Activated naive CD4-positive, alpha-beta T cell treated with anti-CD3 and anti-CD28 coated beads for 36 hours (primary cell): ENCODE measurements at regions of chr12 and their contacts with region 1.

Region 1: GRCh38 chr12:51326762-51327439 is 2.9 kb upstream of the BIN2 start:
- DNase-seq: peak; percentile 37
- H3K4me3 Mint-ChIP-seq: peak overlapping the region; percentile 65
- H3K27ac Mint-ChIP-seq: peak overlapping the region; percentile 91
- H3K4me1 Mint-ChIP-seq: peaks cover 72% of the 10 kb centered on the region
- H3K27me3 Mint-ChIP-seq: no peaks in the 10 kb centered on the region

Region 2: DNA sequence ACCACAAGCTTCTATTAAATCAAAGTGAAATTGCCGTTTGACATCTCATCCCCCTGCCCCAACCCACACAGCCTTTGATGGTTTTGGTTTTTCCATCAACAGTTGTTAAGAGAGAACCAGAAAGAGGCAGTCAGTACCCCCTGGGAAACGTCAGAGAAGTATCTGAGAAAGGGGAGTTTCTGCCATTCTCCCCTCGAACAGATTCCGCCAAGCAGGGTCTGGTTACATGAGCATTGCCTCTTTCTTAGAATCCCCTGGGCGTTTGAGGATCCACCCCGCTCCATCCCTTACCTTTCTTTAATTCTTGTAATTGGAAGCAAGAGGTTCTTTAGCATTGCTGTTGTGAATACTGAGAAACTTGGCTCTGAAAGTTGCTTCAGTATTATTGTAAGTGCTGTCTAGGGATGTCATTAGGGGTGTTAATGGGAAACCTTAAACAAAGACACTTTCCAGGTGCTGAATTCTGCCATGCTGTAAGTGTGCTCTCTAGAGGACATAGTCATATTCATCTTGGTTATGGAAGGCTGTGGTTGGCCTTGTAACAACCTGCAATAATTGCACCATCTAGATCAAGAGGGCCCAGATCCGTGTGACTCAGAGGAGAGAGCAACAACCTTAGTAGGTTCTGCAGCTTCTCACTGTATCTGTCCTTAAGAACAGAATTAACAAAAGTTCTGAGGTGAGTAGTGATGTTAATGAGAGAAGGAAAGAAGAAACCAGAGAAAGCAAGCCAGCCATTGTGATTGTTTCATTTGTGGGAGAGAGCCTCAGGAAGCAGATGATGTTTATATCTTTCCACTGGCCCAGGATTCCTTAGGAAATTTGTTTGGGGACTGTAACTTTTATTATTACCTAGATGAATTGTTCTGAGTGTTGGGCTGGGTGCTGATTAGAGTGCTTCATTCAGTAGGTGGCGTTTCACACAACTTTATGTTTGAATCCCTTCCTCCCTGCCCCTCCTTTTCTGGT is 1576.6 kb before region 1 on chr12:
- CTCF ChIA-PET with region 1: no interaction called
- intact Hi-C with region 1: loop called (anchors 5 kb)
- DNase-seq: peak; percentile 87
- H3K4me3 Mint-ChIP-seq: peak overlapping the region; percentile 40
- H3K27ac Mint-ChIP-seq: peak overlapping the region; percentile 94
- H3K4me1 Mint-ChIP-seq: peaks cover 83% of the 10 kb centered on the region
- H3K27me3 Mint-ChIP-seq: no peaks in the 10 kb centered on the region

Region 3: DNA sequence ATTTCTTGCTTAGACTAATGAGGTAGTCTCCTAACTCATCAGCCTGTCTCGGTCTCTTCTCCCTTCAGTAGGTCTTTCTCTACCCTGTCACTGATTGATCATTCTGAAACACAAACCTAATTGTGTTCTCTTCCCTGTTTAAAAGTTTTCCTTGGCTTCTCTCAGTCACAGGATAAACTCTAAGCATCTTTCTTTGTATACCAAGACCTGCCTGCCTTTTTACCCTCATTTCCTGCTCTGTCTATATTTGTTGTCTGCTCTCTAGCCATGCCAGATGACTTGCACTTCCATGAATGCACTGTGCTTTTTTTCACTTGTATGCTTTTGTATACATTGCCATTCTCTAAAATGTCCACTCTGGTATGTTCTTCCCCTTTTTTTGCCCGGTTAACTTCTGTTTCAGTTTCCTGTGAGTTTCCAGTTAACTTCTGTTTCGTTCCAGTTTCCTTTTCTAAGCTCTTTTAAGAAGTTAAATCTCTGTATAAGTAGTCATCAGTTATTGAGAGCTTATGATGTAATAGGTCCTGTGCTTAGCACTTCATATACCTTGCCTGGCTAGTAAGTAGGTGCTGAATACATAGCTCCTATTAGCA is 809.3 kb before region 1 on chr12:
- CTCF ChIA-PET with region 1: no interaction called
- intact Hi-C with region 1: loop called (anchors 10 kb)
- DNase-seq: peak; percentile 23
- H3K4me3 Mint-ChIP-seq: no peak overlapping the region
- H3K27ac Mint-ChIP-seq: no peak overlapping the region
- H3K4me1 Mint-ChIP-seq: peaks cover 69% of the 10 kb centered on the region
- H3K27me3 Mint-ChIP-seq: no peaks in the 10 kb centered on the region

Region 4: DNA sequence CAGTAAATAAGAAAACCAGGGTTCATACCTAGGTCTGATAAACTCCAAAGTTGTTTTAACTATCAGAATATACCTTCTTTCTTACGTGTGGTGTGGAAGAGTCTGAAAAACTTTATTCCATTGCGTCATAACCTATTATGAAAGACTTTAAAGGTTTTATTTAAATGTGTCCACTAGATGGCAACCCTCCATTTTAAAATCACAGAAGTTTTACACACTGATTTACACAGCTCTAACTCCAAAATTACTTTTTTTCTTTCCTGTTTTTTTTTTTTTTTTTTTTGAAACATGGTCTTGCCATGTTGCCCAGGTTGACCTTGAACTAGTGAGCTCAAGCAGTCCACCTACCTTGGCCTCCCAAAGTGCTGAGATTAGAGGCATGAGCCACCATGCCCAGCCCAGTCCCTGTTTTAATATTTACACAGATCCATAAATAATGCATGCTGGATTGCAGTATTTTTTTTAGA is 501.5 kb before region 1 on chr12:
- CTCF ChIA-PET with region 1: no interaction called
- intact Hi-C with region 1: no loop called
- DNase-seq: no peak
- H3K4me3 Mint-ChIP-seq: no peak overlapping the region
- H3K27ac Mint-ChIP-seq: peak overlapping the region; percentile 52
- H3K4me1 Mint-ChIP-seq: peaks cover 10% of the 10 kb centered on the region
- H3K27me3 Mint-ChIP-seq: no peaks in the 10 kb centered on the region

Region 5: GRCh38 chr12:51047655-51048540 is 279.0 kb before region 1 on chr12 and contains the start of gene LETMD1:
- CTCF ChIA-PET with region 1: no interaction called
- intact Hi-C with region 1: loop called (anchors 5 kb)
- DNase-seq: peak; percentile 95
- H3K4me3 Mint-ChIP-seq: peak within 1 kb of the TSS; percentile 93
- H3K27ac Mint-ChIP-seq: peak within 1 kb of the TSS; percentile 93
- H3K4me1 Mint-ChIP-seq: peaks cover 34% of the 10 kb centered on the region
- H3K27me3 Mint-ChIP-seq: no peaks in the 10 kb centered on the region
- total RNA-seq, gene LETMD1: 88.7 to 89.0 TPM

Region 6: DNA sequence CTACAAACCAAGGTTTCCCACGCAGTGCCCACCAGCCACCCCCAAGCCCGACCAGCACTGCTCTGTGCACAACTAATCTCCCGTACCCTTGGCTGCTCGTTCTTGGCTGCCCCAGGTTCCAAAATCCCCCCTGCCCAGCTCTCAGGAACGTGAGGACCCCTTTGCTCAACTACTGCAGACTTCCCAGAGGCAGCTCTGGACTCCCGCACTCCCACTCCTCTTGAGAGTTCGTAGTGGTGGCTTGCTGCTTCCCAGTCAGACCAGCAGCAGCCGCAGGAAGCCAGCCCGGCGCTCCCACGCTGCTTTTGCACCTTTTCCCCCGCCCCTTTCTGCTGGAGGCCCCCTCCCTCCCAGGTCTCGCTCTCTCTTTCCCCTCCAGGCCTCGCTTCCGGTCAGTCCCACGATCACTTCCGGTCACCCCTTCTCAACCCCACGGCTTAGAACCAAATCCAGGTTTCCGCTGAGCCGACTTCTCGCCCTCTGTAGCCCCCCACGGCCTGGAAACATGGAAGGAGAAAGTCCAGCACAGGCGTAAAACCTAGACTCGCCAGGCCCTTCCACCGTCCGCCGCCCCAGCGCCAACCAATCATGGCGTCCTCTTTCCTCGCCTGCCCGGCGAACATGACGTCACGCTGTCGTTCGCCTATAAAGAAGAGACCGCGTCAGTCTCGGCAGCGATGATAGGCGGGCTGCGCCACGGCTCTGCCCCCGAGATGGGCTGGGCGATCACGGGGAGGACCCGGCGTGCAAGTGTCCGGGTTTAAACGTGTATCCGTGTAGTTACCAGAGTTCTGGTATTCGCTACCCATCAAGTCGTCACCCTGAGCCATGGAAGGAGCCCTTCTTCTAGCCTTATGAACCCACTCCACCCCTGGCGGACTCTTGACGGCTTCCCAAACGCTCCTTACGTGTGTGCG is 154.1 kb before region 1 on chr12 and contains the start of gene TFCP2:
- CTCF ChIA-PET with region 1: no interaction called
- intact Hi-C with region 1: loop called (anchors 5 kb)
- DNase-seq: peak; percentile 96
- H3K4me3 Mint-ChIP-seq: peak within 1 kb of the TSS; percentile 66
- H3K27ac Mint-ChIP-seq: peak within 1 kb of the TSS; percentile 66
- H3K4me1 Mint-ChIP-seq: peaks cover 14% of the 10 kb centered on the region
- H3K27me3 Mint-ChIP-seq: no peaks in the 10 kb centered on the region
- total RNA-seq, gene TFCP2: 23.6 to 25.4 TPM

Region 7: DNA sequence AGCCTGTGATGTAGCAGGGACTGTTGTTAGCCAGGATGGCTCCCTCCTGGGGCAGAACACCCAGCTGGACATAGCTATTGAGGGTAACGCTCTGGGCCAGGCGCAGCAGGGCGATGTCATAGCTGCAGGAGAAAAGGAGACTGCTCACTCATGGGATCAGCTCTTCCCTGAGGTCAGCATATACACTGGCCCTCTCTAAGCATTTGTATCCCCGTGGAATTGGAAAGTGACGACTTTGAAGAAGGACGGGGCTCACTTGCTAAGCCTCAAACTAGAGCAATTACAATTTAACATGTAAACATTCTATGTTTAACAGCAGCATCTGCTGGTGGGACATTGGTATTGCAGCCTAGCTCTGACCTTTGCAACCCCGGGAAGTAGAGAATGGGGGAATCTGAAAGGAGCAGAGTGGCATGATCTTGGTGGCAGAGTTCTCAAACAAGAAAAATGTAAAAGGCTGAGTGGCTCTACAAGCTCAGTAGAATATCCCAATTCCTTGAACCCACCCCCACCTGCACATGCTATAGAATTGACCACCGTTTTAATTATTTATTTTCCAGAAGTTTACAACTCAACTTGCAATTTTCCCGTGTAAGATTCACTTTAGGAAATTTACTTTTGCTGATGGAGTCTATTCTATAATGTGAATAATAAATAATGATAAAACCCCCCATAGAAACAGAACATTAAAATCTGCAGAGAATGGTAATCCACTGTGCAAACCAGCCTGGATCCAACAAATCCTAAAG is 14.5 kb after region 1 on chr12:
- CTCF ChIA-PET with region 1: interaction called, 49 read pairs
- intact Hi-C with region 1: no loop called
- DNase-seq: peak; percentile 88
- H3K4me3 Mint-ChIP-seq: no peak overlapping the region
- H3K27ac Mint-ChIP-seq: no peak overlapping the region
- H3K4me1 Mint-ChIP-seq: peaks cover 18% of the 10 kb centered on the region
- H3K27me3 Mint-ChIP-seq: no peaks in the 10 kb centered on the region

Region 8: GRCh38 chr12:51391283-51392162 is 64.6 kb after region 1 on chr12 and contains the start of gene GALNT6:
- CTCF ChIA-PET with region 1: no interaction called
- intact Hi-C with region 1: loop called (anchors 2 kb)
- DNase-seq: peak; percentile 68
- H3K4me3 Mint-ChIP-seq: peak within 1 kb of the TSS; percentile 83
- H3K27ac Mint-ChIP-seq: peak within 1 kb of the TSS; percentile 38
- H3K4me1 Mint-ChIP-seq: peaks cover 71% of the 10 kb centered on the region
- H3K27me3 Mint-ChIP-seq: no peaks in the 10 kb centered on the region
- total RNA-seq, gene GALNT6: 5.1 to 5.4 TPM

Region 9: DNA sequence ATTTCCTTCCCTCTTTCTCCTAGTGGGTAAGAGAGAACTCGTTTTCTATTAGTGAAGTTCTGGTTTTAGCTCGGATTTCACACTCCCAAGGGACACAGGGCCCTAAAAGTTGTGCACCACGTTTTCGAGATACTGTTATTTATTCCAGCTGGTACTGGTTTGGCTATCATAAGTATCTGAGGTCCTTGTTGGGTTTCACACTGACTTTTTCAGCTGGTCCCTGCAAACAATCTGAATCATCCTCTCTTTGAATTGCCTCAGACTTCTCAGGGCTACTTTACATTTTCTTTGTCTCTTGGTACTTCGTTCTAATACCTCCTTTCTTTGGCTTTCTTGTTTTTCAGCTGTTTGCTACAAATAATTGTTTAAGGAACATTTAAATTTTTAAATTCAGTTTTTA is 339.8 kb after region 1 on chr12:
- CTCF ChIA-PET with region 1: no interaction called
- intact Hi-C with region 1: no loop called
- DNase-seq: no peak
- H3K4me3 Mint-ChIP-seq: no peak overlapping the region
- H3K27ac Mint-ChIP-seq: no peak overlapping the region
- H3K4me1 Mint-ChIP-seq: peaks cover 8% of the 10 kb centered on the region
- H3K27me3 Mint-ChIP-seq: no peaks in the 10 kb centered on the region